ENCODE measurements at regions of chr3 and their contacts with region 1.

Region 1: GRCh38 chr3:170572665-170573253 is 13.1 kb downstream of the SLC7A14 start:
- DNase-seq: peak; percentile 32
- ATAC-seq: peak; percentile 97
- H3K4me3 Mint-ChIP-seq: no peak overlapping the region
- H3K27ac Mint-ChIP-seq: no peak overlapping the region
- H3K4me1 Mint-ChIP-seq: peaks cover 25% of the 10 kb centered on the region
- H3K27me3 Mint-ChIP-seq: peaks cover 34% of the 10 kb centered on the region

Region 2: GRCh38 chr3:170257145-170257544 is 315.6 kb before region 1 on chr3:
- CTCF ChIA-PET with region 1: no interaction called
- POLR2A ChIA-PET with region 1: no interaction called
- intact Hi-C with region 1: loop called in 1 of 2 experiments (anchors 5 kb)
- DNase-seq: peak; percentile 59
- ATAC-seq: peak; percentile 66
- H3K4me3 Mint-ChIP-seq: no peak overlapping the region
- H3K27ac Mint-ChIP-seq: peak overlapping the region; percentile 58
- H3K4me1 Mint-ChIP-seq: peaks cover 43% of the 10 kb centered on the region
- H3K27me3 Mint-ChIP-seq: no peaks in the 10 kb centered on the region

Region 3: GRCh38 chr3:170321321-170322034 is 251.3 kb before region 1 on chr3:
- CTCF ChIA-PET with region 1: no interaction called
- POLR2A ChIA-PET with region 1: no interaction called
- intact Hi-C with region 1: loop called in 1 of 2 experiments (anchors 10 kb)
- DNase-seq: no peak
- ATAC-seq: no peak
- H3K4me3 Mint-ChIP-seq: no peak overlapping the region
- H3K27ac Mint-ChIP-seq: no peak overlapping the region
- H3K4me1 Mint-ChIP-seq: no peaks in the 10 kb centered on the region
- H3K27me3 Mint-ChIP-seq: no peaks in the 10 kb centered on the region

Region 4: DNA sequence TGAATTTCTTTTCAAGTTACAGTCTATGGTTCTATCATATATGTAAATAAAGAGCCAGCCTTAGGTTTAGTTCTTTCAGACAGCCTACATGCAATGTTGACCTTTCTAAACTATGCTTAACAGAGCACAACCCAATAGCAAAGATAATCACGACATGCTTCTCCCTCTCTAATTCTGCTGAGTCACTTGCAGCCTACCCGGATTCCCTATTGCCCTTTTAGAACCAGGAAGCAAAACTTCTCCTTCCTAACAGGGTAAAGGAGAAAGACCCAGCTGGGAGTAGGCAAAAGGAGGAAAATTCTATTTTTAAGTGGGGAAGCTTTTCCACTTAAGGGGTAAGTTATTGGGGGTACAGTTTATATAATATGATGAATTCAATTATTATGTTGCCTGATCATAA is 66.2 kb before region 1 on chr3:
- CTCF ChIA-PET with region 1: no interaction called
- POLR2A ChIA-PET with region 1: no interaction called
- intact Hi-C with region 1: no loop called
- DNase-seq: no peak
- ATAC-seq: no peak
- H3K4me3 Mint-ChIP-seq: no peak overlapping the region
- H3K27ac Mint-ChIP-seq: no peak overlapping the region
- H3K4me1 Mint-ChIP-seq: no peaks in the 10 kb centered on the region
- H3K27me3 Mint-ChIP-seq: peaks cover 4% of the 10 kb centered on the region

Region 5: GRCh38 chr3:170862618-170863374 is 290.0 kb after region 1 on chr3:
- CTCF ChIA-PET with region 1: no interaction called
- POLR2A ChIA-PET with region 1: no interaction called
- intact Hi-C with region 1: loop called in 1 of 2 experiments (anchors 2 kb)
- DNase-seq: no peak
- ATAC-seq: no peak
- H3K4me3 Mint-ChIP-seq: no peak overlapping the region
- H3K27ac Mint-ChIP-seq: no peak overlapping the region
- H3K4me1 Mint-ChIP-seq: peaks cover 13% of the 10 kb centered on the region
- H3K27me3 Mint-ChIP-seq: no peaks in the 10 kb centered on the region

Region 6: DNA sequence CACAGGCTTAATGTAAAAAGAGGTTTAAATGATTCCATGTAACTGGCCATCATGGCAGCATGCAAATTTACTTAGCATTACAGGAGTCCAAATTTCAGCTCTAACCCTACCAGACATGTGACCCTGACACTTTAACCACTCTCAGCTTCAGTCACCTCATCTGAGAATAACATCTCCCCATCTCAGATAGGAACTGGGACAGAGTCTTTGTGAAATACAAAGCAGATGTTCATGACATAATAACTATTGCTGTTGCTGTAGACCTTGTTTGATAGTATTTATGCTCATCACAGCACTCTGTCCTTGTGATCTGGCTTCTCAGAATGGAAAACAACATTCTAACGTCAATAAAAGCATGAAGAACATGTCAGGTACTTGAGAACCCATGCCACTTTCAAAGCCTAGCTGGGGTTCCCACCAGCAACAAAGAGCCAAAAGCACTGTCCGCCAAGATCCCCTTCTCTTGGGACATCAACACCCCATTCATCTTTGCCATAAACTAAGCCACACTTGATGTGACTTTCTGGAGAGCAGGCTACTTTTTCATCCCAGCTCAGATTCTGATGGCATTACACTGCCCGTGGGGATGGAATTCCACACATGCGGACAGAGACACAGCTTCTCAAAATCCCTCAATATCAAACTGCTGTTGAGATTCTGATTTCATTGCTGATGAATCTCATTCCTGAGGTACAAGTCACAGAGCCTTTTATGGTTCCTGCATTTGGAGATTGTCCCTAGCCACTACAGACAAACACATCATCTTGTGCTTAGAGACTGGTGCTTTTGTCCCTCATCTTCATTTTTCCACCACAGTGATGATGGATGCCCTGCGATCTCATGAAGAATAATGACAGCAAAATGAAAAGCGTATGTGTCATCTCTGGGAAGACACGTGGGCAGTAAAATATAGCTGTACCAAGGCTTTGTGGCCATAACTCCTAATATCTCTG is 684.8 kb after region 1 on chr3:
- CTCF ChIA-PET with region 1: no interaction called
- POLR2A ChIA-PET with region 1: no interaction called
- intact Hi-C with region 1: loop called in 1 of 2 experiments (anchors 10 kb)
- DNase-seq: no peak
- ATAC-seq: peak; percentile 28
- H3K4me3 Mint-ChIP-seq: no peak overlapping the region
- H3K27ac Mint-ChIP-seq: peak overlapping the region; percentile 84
- H3K4me1 Mint-ChIP-seq: peaks cover 93% of the 10 kb centered on the region
- H3K27me3 Mint-ChIP-seq: no peaks in the 10 kb centered on the region